ENCODE measurements at regions of chr3 and their contacts with region 1.

Region 1: GRCh38 chr3:34106879-34107278 is 308.4 kb downstream of the PDCD6IP start:
- DNase-seq: no peak
- H3K4me3 ChIP-seq: no peak overlapping the region
- CTCF ChIP-seq: peak; percentile 50

Region 2: DNA sequence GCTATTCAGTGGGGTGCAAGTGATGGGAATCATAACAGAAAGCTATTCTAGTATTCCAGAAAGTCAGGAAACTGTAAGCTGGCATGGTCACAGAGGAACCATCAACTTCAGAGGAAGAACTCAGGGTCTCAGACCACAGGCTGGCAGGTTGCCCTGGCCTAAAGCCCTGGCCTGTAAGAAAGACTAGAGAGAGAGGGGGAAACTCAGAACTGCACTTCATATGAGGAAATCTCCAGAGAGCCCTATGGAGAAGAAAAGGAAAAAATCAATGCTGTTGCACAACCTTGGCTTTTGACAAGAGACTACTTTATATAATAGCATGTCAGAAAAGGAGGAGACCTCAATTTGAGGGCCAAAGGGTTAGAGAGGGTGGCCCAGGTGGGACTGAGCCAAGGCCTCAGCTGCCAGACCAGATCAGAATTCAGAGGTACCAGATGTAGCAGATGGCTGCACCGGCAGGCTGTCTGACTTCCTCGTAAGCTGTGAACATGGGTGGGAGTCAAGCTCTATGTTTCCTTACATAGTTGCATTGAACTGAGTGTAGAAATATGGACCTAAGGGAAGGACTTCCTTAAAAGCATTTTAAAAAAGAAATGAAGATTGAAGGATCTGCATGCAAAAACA is 25.3 kb after region 1 on chr3:
- CTCF ChIA-PET with region 1: interaction called, 10 read pairs
- POLR2A ChIA-PET with region 1: interaction called, 3 read pairs
- DNase-seq: no peak
- H3K4me3 ChIP-seq: no peak overlapping the region
- CTCF ChIP-seq: no peak

Region 3: DNA sequence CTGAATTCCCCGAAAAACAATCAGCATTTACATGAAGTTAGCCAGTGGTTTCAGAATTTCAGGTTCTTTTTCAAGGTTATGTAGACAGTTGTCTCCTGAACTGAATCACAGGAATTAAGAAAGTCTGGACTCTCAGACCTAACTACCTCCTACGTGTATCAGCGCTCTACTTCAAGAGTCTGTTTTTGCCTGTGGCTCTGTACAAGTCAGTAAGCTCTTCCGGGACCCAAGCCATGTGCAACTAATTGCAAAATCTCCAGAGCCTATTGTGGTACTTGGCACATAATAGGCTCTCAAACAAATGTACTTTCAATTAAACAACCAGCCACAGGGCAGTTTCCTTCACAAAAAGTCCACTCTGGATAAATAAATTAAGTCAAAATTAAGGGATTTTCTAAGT is 105.8 kb after region 1 on chr3:
- CTCF ChIA-PET with region 1: no interaction called
- POLR2A ChIA-PET with region 1: no interaction called
- DNase-seq: peak; percentile 76
- H3K4me3 ChIP-seq: no peak overlapping the region
- CTCF ChIP-seq: no peak

Measured in AG04449 (cell line).